Cardiac septum (tissue), 1 donor: ENCODE measurements at regions of chr13 and their contacts with region 1.

Region 1: DNA sequence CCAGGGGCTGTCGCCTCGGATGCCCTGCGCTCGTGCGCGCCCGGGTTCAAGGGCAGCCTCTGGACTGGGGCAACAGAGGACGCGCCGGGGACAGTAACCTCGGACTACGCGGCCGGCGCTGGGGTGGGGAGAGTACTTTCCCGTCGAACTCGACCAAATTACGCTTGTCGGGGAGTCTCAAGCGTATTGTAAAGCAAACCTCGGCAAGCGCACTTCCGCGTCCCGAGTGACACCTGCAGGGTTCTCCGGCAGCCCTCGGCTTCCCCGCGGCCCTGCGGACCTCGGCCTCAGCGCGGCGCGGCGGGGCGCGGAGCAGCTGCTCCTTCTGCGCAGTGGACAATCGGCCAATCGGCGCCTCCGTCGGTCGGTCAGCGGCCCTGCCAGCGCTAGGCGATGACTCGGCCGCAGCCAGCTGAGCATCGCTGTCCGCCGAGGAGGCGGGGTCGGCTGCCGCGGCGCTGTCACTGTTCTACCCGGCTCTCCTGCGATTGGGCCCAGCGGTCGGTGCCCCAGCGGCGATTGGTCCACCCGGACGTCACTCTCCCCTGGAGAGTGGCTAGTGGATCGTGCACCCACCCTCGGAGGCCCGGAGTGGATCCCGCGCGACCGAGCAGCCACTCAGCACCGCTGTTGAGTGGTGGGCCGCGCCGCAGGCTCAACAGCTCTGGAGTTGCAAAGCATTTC is at the start of gene SLC46A3:
- DNase-seq: peak; percentile 99
- total RNA-seq, gene SLC46A3: 9.9 TPM

Region 2: GRCh38 chr13:28658796-28659620 is 59.7 kb before region 1 on chr13 and contains the start of gene POMP:
- intact Hi-C with region 1: loop called (anchors 5 kb)
- DNase-seq: peak; percentile 98
- total RNA-seq, gene POMP: 82.8 TPM

Region 3: GRCh38 chr13:28754698-28755545 is 36.2 kb after region 1 on chr13:
- intact Hi-C with region 1: loop called (anchors 2 kb)
- DNase-seq: peak; percentile 80

Region 4: DNA sequence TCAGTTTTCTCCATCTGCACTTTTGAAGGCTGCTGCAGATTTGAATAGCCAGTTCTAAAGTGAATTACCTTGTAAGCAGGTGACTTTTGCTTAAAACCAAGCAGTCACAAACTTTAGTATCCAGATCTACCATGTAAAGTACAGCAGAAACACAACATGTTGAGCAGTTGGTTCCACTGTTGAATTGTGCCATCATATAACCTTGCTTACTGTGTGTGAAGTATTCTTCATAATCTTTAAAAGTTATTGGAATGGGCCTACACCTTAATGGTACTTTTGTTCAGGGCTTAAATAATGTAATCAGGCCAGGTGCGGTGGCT is 78.2 kb after region 1 on chr13:
- intact Hi-C with region 1: loop called (anchors 1 kb)
- DNase-seq: no peak